Heart right ventricle (tissue), 16 donors: ENCODE measurements at regions of chr7 and their contacts with region 1.

Region 1: GRCh38 chr7:43491984-43492383 is 90.9 kb upstream of the STK17A start:
- DNase-seq: no peak
- ATAC-seq: peak in 1 of 8 donors; percentile 53
- H3K4me3 ChIP-seq: no peak overlapping the region
- H3K27ac ChIP-seq: no peak overlapping the region
- H3K4me1 ChIP-seq: peaks cover 0 to 19% (median 7%) of the 10 kb centered on the region in 9 donors
- H3K27me3 ChIP-seq: no peaks in the 10 kb centered on the region
- CTCF ChIP-seq: no peak

Region 2: DNA sequence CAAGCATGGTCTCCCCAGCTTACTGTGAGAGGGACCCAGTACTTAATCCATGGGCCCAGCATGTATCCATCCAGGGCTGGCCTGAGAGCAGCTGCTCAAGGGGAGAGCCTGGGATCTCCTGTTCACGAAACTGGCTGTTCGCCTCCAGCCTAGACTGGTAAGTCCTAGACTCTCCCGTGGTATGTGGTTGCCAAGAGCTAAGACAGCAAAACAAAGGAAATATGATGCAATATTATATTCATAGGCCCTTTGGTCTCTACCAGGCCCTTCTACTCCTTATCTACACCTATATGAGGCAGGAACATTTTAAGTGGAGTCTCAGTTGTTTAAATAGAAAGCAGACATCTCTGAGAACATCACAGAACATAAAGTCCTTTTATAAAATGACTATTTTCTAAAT is 62.0 kb after region 1 on chr7:
- intact Hi-C with region 1: loop called in 1 of 10 experiments (anchors 10 kb)
- DNase-seq: peak; percentile 20 to 30
- ATAC-seq: peak; percentile 54 to 96 (median 90)
- H3K4me3 ChIP-seq: no peak overlapping the region
- H3K27ac ChIP-seq: peak overlapping the region in 1 of 10 donors; percentile 50
- H3K4me1 ChIP-seq: peaks cover 0 to 11% (median 3%) of the 10 kb centered on the region in 9 donors
- H3K27me3 ChIP-seq: peaks cover 0 to 3% (median 0%) of the 10 kb centered on the region in 7 donors
- CTCF ChIP-seq: no peak

Region 3: GRCh38 chr7:43590862-43591550 is 99.0 kb after region 1 on chr7:
- intact Hi-C with region 1: no loop called
- DNase-seq: no peak
- ATAC-seq: no peak
- H3K4me3 ChIP-seq: no peak overlapping the region
- H3K27ac ChIP-seq: peak overlapping the region in 1 of 10 donors; percentile 1
- H3K4me1 ChIP-seq: peaks cover 0 to 65% (median 2%) of the 10 kb centered on the region in 9 donors
- H3K27me3 ChIP-seq: no peaks in the 10 kb centered on the region
- CTCF ChIP-seq: no peak